Posterior vena cava (tissue), 2 donors: ENCODE measurements at regions of chr10 and their contacts with region 1.

Region 1: DNA sequence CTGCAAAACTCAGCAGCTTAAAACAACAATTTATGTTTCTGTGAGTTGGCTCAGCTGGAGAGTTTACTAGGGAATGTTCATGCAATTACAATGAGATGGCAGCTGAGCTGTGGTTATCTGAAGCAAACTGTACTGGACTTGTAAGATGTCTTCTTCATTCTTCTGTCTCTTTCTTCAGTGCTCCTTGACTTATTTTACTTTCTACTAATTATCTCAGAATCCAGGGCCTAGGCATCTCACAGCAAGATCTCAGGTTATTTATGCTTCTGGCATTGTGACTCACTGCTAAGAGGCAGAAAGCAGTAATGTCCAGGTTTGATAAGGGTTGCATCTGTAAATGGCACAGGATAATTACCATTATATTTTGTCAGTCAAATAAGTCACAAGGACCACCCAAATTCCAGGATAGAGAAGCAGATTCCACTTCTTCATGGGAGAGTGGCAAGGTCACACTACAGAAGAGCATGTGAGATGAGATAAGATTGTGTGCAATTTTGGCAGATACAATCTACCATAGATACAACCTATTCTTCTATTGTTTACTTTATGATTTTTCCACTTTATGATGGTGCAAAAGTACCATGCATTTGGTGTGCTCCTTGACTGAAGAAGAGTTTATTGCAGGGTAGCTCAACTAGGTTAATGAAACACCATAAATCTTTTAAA is 16.8 kb downstream of the VIM start:
- DNase-seq: no peak

Region 2: GRCh38 chr10:16848562-16849154 is 396.2 kb before region 1 on chr10:
- intact Hi-C with region 1: loop called in 1 of 2 experiments (anchors 5 kb)
- DNase-seq: no peak